CD4-positive, alpha-beta memory T cell (primary cell): ENCODE measurements at regions of chr6 and their contacts with region 1.

Region 1: GRCh38 chr6:87589693-87590549 is at the starts of genes ORC3 and RARS2:
- DNase-seq: peak; percentile 91 to 95 (median 93)
- H3K4me3 ChIP-seq: peak within 1 kb of the TSS; percentile 80 to 97
- H3K4me3 Mint-ChIP-seq: peak within 1 kb of the TSS; percentile 94 to 97 (median 96)
- H3K27ac ChIP-seq: peak within 1 kb of the TSS; percentile 84
- H3K27ac Mint-ChIP-seq: peak within 1 kb of the TSS; percentile 87 to 98 (median 95)
- H3K4me1 ChIP-seq: peaks cover 49% of the 10 kb centered on the region
- H3K4me1 Mint-ChIP-seq: peaks cover 44 to 75% (median 56%) of the 10 kb centered on the region in 4 donors
- H3K27me3 ChIP-seq: no peaks in the 10 kb centered on the region
- H3K27me3 Mint-ChIP-seq: no peaks in the 10 kb centered on the region
- total RNA-seq, gene ORC3: 30.4 to 30.7 TPM
- total RNA-seq, gene RARS2: 38.8 to 39.3 TPM

Region 2: DNA sequence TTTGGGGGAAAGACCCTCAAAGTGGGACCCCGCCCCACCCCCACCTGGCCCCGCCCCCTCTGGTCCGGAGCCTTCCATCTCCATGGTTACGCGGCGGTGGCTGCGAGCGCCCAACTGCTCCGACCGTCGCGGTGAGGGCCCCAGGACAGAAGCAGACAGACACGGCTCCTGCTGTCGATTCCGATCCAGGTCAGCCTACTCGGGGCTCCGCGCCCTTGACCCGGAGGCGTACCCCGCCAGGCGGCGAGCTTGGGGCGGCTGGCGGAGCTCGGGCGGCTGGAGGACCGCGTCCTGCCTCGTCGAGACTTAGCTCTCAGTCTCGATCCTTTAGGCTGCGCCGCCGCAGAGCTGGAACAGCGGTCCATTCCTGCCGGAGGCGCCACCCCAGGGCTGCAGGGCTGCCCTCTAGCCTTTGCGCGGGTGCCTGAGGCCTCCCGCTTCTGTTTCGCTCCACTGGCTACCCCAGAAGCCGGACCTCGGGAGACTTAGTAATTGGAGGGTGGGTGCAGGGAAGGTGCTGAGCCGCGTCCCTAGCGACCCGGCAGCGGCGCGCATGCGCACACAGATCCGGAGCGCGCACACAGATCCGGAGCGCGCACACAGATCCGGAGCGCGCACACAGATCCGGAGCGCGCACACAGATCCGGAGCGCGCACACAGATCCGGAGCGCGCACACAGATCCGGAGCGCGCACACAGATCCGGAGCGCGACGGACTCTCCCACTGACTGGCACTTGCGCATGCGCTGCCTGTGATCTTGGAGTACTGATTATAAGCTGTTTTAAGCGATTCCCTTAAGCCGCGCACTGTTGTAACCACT is 181.8 kb before region 1 on chr6 and contains the start of gene CFAP206:
- CTCF ChIA-PET with region 1: no interaction called
- POLR2A ChIA-PET with region 1: interaction called, 4 read pairs
- intact Hi-C with region 1: loop called (anchors 1 kb)
- DNase-seq: peak; percentile 79 to 88 (median 85)
- H3K4me3 ChIP-seq: peak within 1 kb of the TSS; percentile 75 to 84
- H3K4me3 Mint-ChIP-seq: peak within 1 kb of the TSS; percentile 88 to 96 (median 89)
- H3K27ac ChIP-seq: peak within 1 kb of the TSS; percentile 67
- H3K27ac Mint-ChIP-seq: peak within 1 kb of the TSS; percentile 83 to 93 (median 89)
- H3K4me1 ChIP-seq: peaks cover 11% of the 10 kb centered on the region
- H3K4me1 Mint-ChIP-seq: peaks cover 4 to 13% (median 5%) of the 10 kb centered on the region in 4 donors
- H3K27me3 ChIP-seq: no peaks in the 10 kb centered on the region
- H3K27me3 Mint-ChIP-seq: peaks cover 4 to 10% of the 10 kb centered on the region in 2 donors
- total RNA-seq, gene CFAP206: 0.25 TPM in 1 of 2 experiments, not detected in the other

Region 3: GRCh38 chr6:87472525-87473418 is 117.1 kb before region 1 on chr6 and contains the start of gene SLC35A1:
- CTCF ChIA-PET with region 1: no interaction called
- POLR2A ChIA-PET with region 1: interaction called, 14 read pairs
- intact Hi-C with region 1: loop called (anchors 1 kb)
- DNase-seq: peak; percentile 80 to 92 (median 86)
- H3K4me3 ChIP-seq: peak within 1 kb of the TSS; percentile 67 to 72
- H3K4me3 Mint-ChIP-seq: peak within 1 kb of the TSS; percentile 97 to 99 (median 99)
- H3K27ac ChIP-seq: peak within 1 kb of the TSS; percentile 94
- H3K27ac Mint-ChIP-seq: peak within 1 kb of the TSS; percentile 93 to 100 (median 100)
- H3K4me1 ChIP-seq: peaks cover 18% of the 10 kb centered on the region
- H3K4me1 Mint-ChIP-seq: peaks cover 9 to 27% (median 16%) of the 10 kb centered on the region in 4 donors
- H3K27me3 ChIP-seq: no peaks in the 10 kb centered on the region
- H3K27me3 Mint-ChIP-seq: peaks cover 0 to 2% of the 10 kb centered on the region in 2 donors
- total RNA-seq, gene SLC35A1: 20.4 to 26.2 TPM

Region 4: GRCh38 chr6:87723170-87724078 is 133.5 kb after region 1 on chr6:
- CTCF ChIA-PET with region 1: no interaction called
- POLR2A ChIA-PET with region 1: no interaction called
- intact Hi-C with region 1: no loop called
- DNase-seq: no peak
- H3K4me3 ChIP-seq: no peak overlapping the region
- H3K4me3 Mint-ChIP-seq: peak overlapping the region in 5 of 8 donors; percentile 4 to 37 (median 13)
- H3K27ac ChIP-seq: no peak overlapping the region
- H3K27ac Mint-ChIP-seq: peak overlapping the region in 3 of 7 donors; percentile 14 to 47 (median 26)
- H3K4me1 ChIP-seq: peaks cover 40% of the 10 kb centered on the region
- H3K4me1 Mint-ChIP-seq: peaks cover 24 to 46% (median 34%) of the 10 kb centered on the region in 4 donors
- H3K27me3 ChIP-seq: no peaks in the 10 kb centered on the region
- H3K27me3 Mint-ChIP-seq: no peaks in the 10 kb centered on the region